H1 (cell line): ENCODE measurements at regions of chrX and their contacts with region 1.

Region 1: GRCh38 chrX:110432091-110432905 is 73.7 kb downstream of the RTL9 start:
- DNase-seq: no peak
- H3K4me3 ChIP-seq: no peak overlapping the region
- H3K27ac ChIP-seq: no peak overlapping the region
- H3K4me1 ChIP-seq: peaks cover 0 to 4% (median 0%) of the 10 kb centered on the region in 4 experiments; a peak in 4 of 7 replicates
- H3K27me3 ChIP-seq: no peaks in the 10 kb centered on the region
- CTCF ChIP-seq: no peak
- EP300 ChIP-seq: no peak
- POLR2A ChIP-seq: no peak
- RAD21 ChIP-seq: no peak

Region 2: DNA sequence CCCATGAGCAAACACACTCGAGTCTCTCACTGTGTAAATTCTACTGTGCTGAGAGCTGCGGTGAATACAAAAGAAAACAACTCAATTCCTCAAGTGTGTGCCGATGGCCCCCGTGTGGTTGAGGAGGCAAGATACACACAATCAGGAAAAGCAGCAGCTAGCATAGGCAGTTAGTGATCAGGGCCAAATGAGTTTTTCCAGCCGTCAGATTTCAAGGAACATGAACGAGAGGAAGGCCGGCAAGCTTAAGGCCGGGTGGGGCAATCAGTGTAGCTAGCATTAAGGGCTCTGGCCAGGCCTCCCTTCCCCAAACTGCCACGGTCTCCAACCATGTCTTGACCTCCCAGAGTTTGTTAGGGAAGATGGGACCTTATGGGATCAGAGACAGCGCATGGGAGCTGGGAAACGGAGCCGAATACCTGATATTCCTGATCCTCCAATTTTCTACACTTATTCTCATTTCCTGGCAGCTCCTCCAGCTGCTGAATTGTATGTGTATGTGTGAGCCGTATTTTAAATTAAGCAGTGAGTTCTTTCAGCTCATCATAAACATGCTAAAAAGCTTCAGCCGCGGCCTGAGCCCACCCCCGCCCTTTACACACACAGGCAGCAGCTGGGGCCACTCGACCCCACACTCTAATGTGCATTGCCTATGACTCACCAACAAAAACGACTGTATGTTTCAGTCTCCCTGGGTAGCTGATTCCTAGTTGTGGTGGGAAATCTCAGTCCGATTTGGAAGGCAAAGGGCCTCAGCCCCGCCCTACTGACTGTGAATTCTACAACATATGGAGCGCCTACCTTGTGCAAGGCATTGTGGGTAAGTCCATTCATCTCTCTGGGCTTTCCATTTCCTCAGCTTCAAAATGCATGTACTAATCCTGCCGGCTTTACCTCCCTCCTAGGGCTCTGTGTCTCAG is 13.7 kb before region 1 on chrX:
- CTCF ChIA-PET with region 1: interaction called, 48 read pairs
- POLR2A ChIA-PET with region 1: no interaction called
- DNase-seq: no peak
- H3K4me3 ChIP-seq: no peak overlapping the region
- H3K27ac ChIP-seq: no peak overlapping the region
- H3K4me1 ChIP-seq: peaks cover 0 to 6% (median 1%) of the 10 kb centered on the region in 4 experiments; a peak in 3 of 7 replicates
- H3K27me3 ChIP-seq: no peaks in the 10 kb centered on the region
- CTCF ChIP-seq: peak; percentile 28 to 55 (median 43)
- EP300 ChIP-seq: no peak
- POLR2A ChIP-seq: no peak
- RAD21 ChIP-seq: peak; percentile 53 to 63